ENCODE measurements at regions of chr1 and their contacts with region 1.

Region 1: GRCh38 chr1:220786337-220787068 is at the start of gene MTARC1:
- DNase-seq: peak; percentile 86
- ATAC-seq: peak; percentile 93
- H3K4me3 ChIP-seq: peak within 1 kb of the TSS; percentile 60 to 79 (median 64)
- H3K27ac ChIP-seq: peak within 1 kb of the TSS; percentile 96
- H3K4me1 ChIP-seq: peaks cover 40% of the 10 kb centered on the region
- H3K27me3 ChIP-seq: no peaks in the 10 kb centered on the region
- CTCF ChIP-seq: peak; percentile 33; the same call in 1 of the 2 replicates
- EP300 ChIP-seq: no peak
- POLR2A ChIP-seq: peak; percentile 56 to 86
- RAD21 ChIP-seq: peak; percentile 12; the same call in 1 of the 2 replicates
- total RNA-seq, gene MTARC1: 64.2 and 106 TPM in 2 replicates

Region 2: DNA sequence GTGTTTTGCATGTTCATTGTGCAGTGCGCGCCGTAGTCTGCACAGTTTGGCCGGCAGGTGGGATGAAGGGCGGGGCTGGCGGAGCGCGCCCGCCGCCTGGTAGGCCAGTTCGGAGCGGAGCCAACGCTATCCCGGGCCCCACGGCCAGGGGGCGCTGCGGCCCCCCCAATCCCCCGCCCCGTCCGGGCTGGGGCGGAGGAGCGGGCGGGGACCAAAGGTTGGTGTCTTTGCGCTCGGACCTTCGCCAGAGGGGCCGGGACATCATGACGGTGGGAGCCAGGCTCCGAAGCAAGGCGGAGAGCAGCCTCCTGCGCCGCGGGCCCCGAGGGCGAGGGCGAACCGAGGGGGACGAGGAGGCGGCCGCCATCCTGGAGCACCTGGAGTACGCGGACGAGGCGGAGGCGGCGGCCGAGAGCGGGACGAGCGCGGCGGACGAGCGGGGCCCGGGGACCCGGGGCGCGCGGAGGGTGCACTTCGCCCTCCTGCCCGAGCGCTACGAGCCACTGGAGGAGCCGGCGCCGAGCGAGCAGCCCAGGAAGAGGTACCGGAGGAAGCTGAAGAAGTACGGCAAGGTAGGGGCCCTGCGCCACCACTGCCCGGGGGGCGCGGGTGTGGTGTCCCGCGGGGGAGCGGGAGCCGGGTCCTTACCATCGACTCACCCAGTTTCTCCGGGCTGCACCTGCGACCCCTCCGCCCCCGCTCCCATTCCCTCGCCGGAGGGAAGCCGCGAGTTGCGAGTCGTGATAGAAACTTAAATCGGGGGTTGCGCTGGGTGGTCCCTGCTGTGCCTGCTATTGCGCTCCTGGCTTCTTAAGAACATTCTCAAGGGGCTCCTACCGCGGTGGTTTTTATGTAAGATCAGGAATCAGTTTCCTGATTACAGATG is 96.1 kb before region 1 on chr1 and contains the start of gene C1orf115:
- CTCF ChIA-PET with region 1: no interaction called
- POLR2A ChIA-PET with region 1: interaction called, 14 read pairs
- in situ Hi-C with region 1: no loop called
- intact Hi-C with region 1: no loop called
- DNase-seq: peak; percentile 68
- ATAC-seq: peak; percentile 85
- H3K4me3 ChIP-seq: peak within 1 kb of the TSS; percentile 81 to 86 (median 82)
- H3K27ac ChIP-seq: peak within 1 kb of the TSS; percentile 61
- H3K4me1 ChIP-seq: peaks cover 45% of the 10 kb centered on the region
- H3K27me3 ChIP-seq: no peaks in the 10 kb centered on the region; a peak in 2 of 5 replicates
- CTCF ChIP-seq: peak; percentile 94
- EP300 ChIP-seq: no peak; a peak in 1 of 4 replicates
- POLR2A ChIP-seq: peak; percentile 63 to 87
- RAD21 ChIP-seq: peak; percentile 96
- total RNA-seq, gene C1orf115: 85.9 and 86.7 TPM in 2 replicates

Region 3: GRCh38 chr1:220748089-220748934 is 38.2 kb before region 1 on chr1 and contains the start of gene MTARC2:
- CTCF ChIA-PET with region 1: no interaction called
- POLR2A ChIA-PET with region 1: interaction called, 19 read pairs
- in situ Hi-C with region 1: no loop called
- intact Hi-C with region 1: no loop called
- DNase-seq: peak; percentile 83
- ATAC-seq: peak; percentile 93
- H3K4me3 ChIP-seq: peak within 1 kb of the TSS; percentile 65 to 87 (median 79)
- H3K27ac ChIP-seq: peak within 1 kb of the TSS; percentile 68
- H3K4me1 ChIP-seq: peaks cover 57% of the 10 kb centered on the region
- H3K27me3 ChIP-seq: peaks cover 0 to 16% of the 10 kb centered on the region in 2 experiments; a peak in 3 of 5 replicates
- CTCF ChIP-seq: peak; percentile 3; the same call in 1 of the 2 replicates
- EP300 ChIP-seq: peak in 1 of 2 experiments; percentile 27; a peak in 1 of 4 replicates
- POLR2A ChIP-seq: peak; percentile 80 to 89
- RAD21 ChIP-seq: no peak
- total RNA-seq, gene MTARC2: 4.7 and 10.1 TPM in 2 replicates

Region 4: GRCh38 chr1:220803401-220804201 is 17.1 kb after region 1 on chr1:
- CTCF ChIA-PET with region 1: no interaction called
- POLR2A ChIA-PET with region 1: no interaction called
- in situ Hi-C with region 1: no loop called
- intact Hi-C with region 1: loop called (anchors 2 kb)
- DNase-seq: peak; percentile 25
- ATAC-seq: peak; percentile 83
- H3K4me3 ChIP-seq: no peak overlapping the region
- H3K27ac ChIP-seq: no peak overlapping the region
- H3K4me1 ChIP-seq: no peaks in the 10 kb centered on the region
- H3K27me3 ChIP-seq: no peaks in the 10 kb centered on the region
- CTCF ChIP-seq: peak; percentile 59
- EP300 ChIP-seq: no peak
- POLR2A ChIP-seq: no peak
- RAD21 ChIP-seq: no peak